Activated naive CD4-positive, alpha-beta T cell treated with anti-CD3 and anti-CD28 coated beads for 36 hours (primary cell): ENCODE measurements at regions of chr10 and their contacts with region 1.

Region 1: DNA sequence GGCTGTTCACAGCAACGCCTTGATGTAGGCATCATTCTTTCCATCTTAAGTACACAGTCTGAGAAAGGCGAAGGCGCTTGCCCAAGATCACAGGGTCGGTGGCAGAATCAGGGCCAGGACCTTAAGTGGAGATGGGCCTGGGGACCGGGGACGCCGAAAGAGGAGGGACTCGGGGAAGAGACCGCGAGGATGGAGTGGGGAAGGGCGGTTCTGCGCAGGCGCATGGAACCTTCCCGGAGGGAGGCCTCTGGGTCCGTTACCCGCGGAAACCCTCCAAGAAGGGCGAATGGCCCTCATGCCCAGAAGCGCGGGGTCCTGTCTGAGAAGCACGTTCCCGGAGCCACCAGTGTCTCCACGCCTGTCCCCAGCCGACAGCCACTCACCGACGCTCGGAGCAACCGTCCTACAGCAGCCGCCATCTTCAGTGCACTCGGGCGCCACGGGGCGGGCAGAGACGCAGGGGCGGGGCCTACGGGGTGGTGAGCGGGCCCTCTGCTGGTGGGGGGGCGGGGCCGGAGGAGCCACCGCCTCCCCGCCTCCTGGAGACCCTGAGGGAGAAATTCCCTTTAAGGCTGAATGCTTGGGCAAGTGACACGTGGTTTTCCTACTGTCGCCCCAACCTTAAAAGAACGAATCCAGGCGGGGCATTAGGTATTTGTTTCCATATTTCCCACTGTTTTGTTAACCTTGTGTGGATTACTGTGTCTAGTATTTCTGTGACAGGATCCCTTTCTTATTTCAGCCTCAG is at the start of gene PRDX3:
- DNase-seq: peak; percentile 96
- H3K4me3 Mint-ChIP-seq: peak within 1 kb of the TSS; percentile 93
- H3K27ac Mint-ChIP-seq: peak within 1 kb of the TSS; percentile 95
- H3K4me1 Mint-ChIP-seq: peaks cover 42% of the 10 kb centered on the region
- H3K27me3 Mint-ChIP-seq: no peaks in the 10 kb centered on the region
- total RNA-seq, gene PRDX3: 215 to 216 TPM

Region 2: GRCh38 chr10:118737603-118738302 is 440.8 kb before region 1 on chr10:
- CTCF ChIA-PET with region 1: no interaction called
- intact Hi-C with region 1: loop called (anchors 5 kb)
- DNase-seq: no peak
- H3K4me3 Mint-ChIP-seq: no peak overlapping the region
- H3K27ac Mint-ChIP-seq: no peak overlapping the region
- H3K4me1 Mint-ChIP-seq: peaks cover 80% of the 10 kb centered on the region
- H3K27me3 Mint-ChIP-seq: no peaks in the 10 kb centered on the region

Region 3: DNA sequence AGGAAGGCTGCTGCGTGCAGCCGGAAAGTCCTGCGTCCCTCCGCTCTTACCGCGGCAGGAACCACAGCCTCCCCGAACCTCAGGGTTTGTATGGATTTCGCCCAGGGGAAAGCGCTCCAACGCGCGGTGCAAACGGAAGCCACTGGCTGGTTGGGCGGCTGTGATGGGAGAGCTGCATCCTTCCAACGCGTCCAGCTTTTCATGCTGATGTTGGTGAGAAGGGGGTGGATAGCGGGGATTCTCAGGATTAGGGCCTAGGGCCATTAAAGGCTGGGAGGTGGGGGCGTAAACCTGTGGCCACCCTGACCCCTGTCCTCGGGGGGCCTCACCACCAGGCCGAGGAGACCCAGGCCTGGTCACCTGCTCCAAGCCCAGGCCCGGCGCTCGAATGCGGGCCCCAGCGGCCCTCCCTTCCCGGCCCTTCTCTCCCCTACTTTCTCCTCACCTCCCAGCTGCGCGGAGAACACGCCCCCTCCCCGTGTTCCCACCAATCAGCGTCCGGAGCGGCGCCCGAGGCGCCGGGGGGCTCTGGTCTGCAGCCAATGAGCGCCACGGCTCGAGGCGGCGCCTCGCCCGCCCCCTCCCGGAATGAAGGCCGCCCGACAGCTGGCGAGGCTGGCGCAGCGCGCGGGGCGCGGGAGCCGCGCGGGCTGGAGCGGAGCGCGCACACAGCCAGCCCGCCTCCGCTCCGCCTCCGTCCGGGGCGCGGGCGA is 149.5 kb before region 1 on chr10:
- CTCF ChIA-PET with region 1: no interaction called
- intact Hi-C with region 1: loop called (anchors 1 kb)
- DNase-seq: peak; percentile 73
- H3K4me3 Mint-ChIP-seq: peak overlapping the region; percentile 66
- H3K27ac Mint-ChIP-seq: no peak overlapping the region
- H3K4me1 Mint-ChIP-seq: peaks cover 16% of the 10 kb centered on the region
- H3K27me3 Mint-ChIP-seq: peaks cover 4% of the 10 kb centered on the region

Region 4: GRCh38 chr10:119080521-119081260 is 97.9 kb before region 1 on chr10 and contains the start of gene EIF3A:
- CTCF ChIA-PET with region 1: no interaction called
- intact Hi-C with region 1: loop called (anchors 1 kb)
- DNase-seq: peak; percentile 90
- H3K4me3 Mint-ChIP-seq: peak within 1 kb of the TSS; percentile 95
- H3K27ac Mint-ChIP-seq: peak within 1 kb of the TSS; percentile 98
- H3K4me1 Mint-ChIP-seq: peaks cover 33% of the 10 kb centered on the region
- H3K27me3 Mint-ChIP-seq: no peaks in the 10 kb centered on the region
- total RNA-seq, gene EIF3A: 113 to 120 TPM

Region 5: DNA sequence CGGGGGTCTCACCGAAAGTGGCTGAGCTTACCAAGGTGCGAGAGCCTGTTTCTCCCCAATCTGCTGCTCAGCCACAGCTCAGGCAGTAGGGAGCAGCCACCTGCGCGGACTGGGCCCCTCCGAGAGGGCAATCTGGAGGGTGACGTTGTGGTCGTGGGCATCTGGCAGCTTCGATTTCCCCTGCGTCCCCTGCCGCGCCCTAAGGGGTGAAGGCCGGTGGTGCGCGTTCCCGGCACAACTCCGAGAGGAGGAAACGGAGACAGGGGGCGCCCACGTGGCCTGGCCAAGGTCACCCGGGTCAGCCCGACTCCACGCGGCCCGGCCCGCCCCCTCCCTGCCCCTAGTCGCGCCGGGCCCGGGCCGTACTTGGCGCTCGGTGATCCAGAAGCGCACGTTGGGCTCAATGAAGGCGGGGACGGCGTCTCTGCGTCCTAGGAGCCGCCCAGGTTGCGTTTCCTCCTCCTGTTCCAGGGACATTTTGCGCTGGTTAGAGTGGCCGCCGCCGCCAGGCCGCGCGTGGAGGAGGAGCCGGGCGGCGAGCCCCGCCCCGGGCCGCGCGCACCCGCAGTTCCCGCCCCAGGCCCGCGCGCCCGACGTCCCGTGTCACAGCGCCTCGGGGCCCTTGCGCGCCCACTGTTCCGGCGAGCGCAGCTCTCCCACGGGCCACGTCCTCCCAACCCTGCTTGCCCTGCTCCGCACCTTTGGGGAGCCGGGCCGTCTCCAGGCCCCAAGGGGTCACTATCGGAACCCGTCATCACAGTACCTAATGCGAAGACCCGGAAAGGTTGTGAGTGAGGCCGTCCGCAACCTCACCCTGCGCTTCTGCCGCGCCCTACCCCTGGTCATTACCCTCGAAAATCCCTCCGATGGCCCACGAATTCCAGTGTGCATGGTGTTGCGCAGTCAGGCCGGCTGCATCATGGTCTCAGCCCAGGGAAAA is 13.1 kb before region 1 on chr10 and contains the start of gene SFXN4:
- CTCF ChIA-PET with region 1: interaction called, 4 read pairs
- intact Hi-C with region 1: loop called (anchors 1 kb)
- DNase-seq: peak; percentile 75
- H3K4me3 Mint-ChIP-seq: peak within 1 kb of the TSS; percentile 83
- H3K27ac Mint-ChIP-seq: peak within 1 kb of the TSS; percentile 85
- H3K4me1 Mint-ChIP-seq: peaks cover 42% of the 10 kb centered on the region
- H3K27me3 Mint-ChIP-seq: no peaks in the 10 kb centered on the region
- total RNA-seq, gene SFXN4: 46.1 to 51.7 TPM

Region 6: GRCh38 chr10:119502209-119502608 is 323.7 kb after region 1 on chr10:
- CTCF ChIA-PET with region 1: no interaction called
- intact Hi-C with region 1: loop called (anchors 1 kb)
- DNase-seq: peak; percentile 93
- H3K4me3 Mint-ChIP-seq: peak overlapping the region; percentile 47
- H3K27ac Mint-ChIP-seq: peak overlapping the region; percentile 99
- H3K4me1 Mint-ChIP-seq: peaks cover 98% of the 10 kb centered on the region
- H3K27me3 Mint-ChIP-seq: no peaks in the 10 kb centered on the region